ENCODE measurements at regions of chr3 and their contacts with region 1.

Region 1: GRCh38 chr3:119588112-119588511 is 8.8 kb downstream of the ADPRH start:
- H3K4me3 Mint-ChIP-seq: peak overlapping the region; percentile 33
- H3K27ac Mint-ChIP-seq: peak overlapping the region; percentile 90
- H3K4me1 Mint-ChIP-seq: peaks cover 59% of the 10 kb centered on the region
- H3K27me3 Mint-ChIP-seq: peaks cover 2% of the 10 kb centered on the region

Region 2: GRCh38 chr3:119570216-119570615 is 17.9 kb before region 1 on chr3:
- intact Hi-C with region 1: loop called (anchors 2 kb)
- H3K4me3 Mint-ChIP-seq: peak overlapping the region; percentile 39
- H3K27ac Mint-ChIP-seq: peak overlapping the region; percentile 91
- H3K4me1 Mint-ChIP-seq: peaks cover 45% of the 10 kb centered on the region
- H3K27me3 Mint-ChIP-seq: no peaks in the 10 kb centered on the region

Region 3: DNA sequence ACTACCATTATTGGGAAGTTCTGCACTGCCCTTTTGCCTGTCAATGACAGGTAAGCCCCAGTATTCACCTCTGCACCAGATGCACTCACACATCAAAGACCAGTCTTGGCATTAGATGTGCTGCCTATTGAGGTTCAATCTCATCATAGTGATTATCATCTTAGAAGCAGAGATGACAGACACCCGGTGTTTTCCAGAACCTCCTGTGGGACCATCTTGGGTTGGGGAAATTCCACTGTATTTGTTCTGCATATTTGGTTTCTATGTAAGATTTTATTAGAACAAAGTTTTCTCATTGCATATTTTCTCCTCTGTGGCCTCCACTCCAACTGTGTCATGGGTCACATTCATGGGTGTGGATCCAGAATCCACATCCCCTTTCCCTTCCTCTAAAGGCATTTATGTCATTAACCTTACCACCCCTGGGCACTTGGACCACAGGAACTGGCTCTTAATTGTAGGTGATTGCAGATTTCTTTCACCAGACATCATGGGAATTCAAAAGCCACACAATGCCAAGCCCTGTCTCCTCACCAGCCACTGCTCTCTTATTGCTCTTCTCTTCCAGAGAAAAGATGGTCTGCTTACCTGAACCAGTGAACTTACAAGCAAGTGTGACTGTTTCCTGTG is 40.8 kb after region 1 on chr3:
- intact Hi-C with region 1: loop called (anchors 2 kb)
- H3K4me3 Mint-ChIP-seq: peak overlapping the region; percentile 6
- H3K27ac Mint-ChIP-seq: peak overlapping the region; percentile 89
- H3K4me1 Mint-ChIP-seq: peaks cover 92% of the 10 kb centered on the region
- H3K27me3 Mint-ChIP-seq: peaks cover 3% of the 10 kb centered on the region

Region 4: DNA sequence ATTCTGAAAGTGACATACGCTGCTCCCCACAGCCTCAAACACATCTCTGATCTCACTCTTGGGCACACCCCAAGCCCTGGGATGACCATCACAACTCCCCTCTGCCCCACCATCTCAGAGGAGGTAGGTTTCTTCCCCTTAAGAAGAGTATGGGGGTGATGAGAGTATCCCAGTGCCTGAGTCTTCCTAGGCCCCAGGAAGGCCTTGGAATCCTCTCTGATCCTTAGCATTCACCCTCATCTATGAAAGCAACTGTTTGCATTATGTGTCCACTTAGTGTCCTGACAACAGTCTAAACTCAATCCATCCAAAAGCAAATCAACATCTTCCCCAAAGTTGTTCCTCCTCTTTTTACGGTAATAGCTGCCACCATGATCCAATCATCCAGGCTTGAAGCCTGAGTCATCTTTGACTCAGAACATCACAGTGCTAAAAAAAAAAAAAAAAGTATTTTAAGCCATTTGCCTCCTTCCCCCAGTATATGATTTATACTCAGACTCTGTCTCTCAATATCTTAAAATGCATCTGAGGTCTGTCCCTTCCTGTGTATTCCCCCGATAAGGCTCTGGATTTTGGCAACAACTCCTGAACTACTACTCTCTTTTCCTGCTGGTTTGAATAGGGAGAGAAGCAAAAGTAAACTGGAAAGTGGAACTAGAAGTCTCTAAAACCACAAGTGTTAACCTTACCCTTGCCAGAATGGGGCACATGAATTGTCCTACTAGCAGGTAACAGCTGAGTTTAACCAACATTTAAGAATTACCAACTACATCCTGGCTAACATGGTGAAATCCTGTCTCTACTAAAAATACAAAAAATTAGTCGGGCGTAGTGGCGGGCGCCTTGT is 49.8 kb after region 1 on chr3:
- intact Hi-C with region 1: loop called (anchors 2 kb)
- H3K4me3 Mint-ChIP-seq: peak overlapping the region; percentile 64
- H3K27ac Mint-ChIP-seq: peak overlapping the region; percentile 99
- H3K4me1 Mint-ChIP-seq: peaks cover 75% of the 10 kb centered on the region
- H3K27me3 Mint-ChIP-seq: no peaks in the 10 kb centered on the region